Activated naive CD4-positive, alpha-beta T cell treated with anti-CD3 and anti-CD28 coated beads for 36 hours (primary cell): ENCODE measurements at regions of chr6 and their contacts with region 1.

Region 1: DNA sequence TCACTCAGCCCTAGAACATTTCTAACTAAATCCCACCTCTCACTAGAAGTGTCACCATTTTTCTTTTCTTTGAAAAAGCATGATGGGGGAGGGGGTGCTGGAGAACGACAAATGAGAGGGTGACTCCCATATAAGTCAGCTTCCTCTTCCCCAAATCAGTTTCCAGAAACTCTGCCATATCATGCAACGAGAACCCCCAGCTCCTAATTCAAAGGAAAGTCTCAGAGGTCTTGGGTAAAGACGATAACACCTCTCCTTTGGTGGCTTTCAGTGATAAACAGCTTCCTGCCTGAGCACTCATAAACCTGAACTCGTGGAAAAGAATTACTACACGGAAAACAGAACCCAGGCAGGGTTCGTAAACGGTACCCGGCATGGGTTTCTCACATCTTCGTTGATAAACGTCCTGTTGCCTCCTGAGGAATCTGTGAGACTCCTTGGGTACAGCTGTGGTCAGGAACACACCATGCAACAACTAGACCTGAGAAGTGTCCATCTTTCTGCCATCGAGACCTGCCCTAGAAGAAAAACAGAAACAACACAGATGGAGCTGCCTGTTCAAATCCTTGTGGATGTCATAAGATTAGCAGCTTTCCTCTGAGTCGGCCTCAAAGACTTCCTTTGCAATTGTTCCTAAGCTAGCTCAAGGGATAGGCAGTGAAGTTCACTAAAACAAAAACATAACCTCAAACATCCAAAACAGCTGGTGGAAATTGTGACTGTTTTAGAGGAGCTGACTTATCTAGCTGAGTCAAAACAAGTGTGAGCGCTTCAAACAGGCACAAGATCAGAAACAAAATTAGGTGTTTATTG is 185.8 kb upstream of the PRDM1 start:
- DNase-seq: peak; percentile 52
- H3K4me3 Mint-ChIP-seq: peak overlapping the region; percentile 45
- H3K27ac Mint-ChIP-seq: peak overlapping the region; percentile 73
- H3K4me1 Mint-ChIP-seq: peaks cover 16% of the 10 kb centered on the region
- H3K27me3 Mint-ChIP-seq: peaks cover 4% of the 10 kb centered on the region

Region 2: DNA sequence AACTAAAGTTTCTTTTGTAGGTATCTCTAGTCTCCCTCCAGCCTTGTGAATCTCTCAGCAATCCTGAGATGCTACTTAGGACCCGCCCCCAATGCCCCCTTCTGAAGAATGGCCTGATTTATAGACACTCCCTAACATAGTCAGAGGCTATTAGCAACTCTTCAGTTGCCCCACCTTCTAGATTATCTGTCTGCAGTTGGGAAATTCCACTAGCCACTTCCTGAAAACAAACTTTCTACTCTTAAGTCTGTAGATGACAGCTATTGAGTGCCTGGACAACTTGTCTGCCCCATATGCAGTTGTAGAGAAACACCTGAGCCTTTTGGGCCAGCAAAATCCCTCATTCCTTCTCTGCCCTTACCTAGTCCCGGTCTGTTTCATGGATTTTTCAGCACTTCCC is 309.3 kb before region 1 on chr6:
- CTCF ChIA-PET with region 1: no interaction called
- intact Hi-C with region 1: no loop called
- DNase-seq: peak; percentile 11
- H3K4me3 Mint-ChIP-seq: no peak overlapping the region
- H3K27ac Mint-ChIP-seq: no peak overlapping the region
- H3K4me1 Mint-ChIP-seq: peaks cover 22% of the 10 kb centered on the region
- H3K27me3 Mint-ChIP-seq: no peaks in the 10 kb centered on the region

Region 3: DNA sequence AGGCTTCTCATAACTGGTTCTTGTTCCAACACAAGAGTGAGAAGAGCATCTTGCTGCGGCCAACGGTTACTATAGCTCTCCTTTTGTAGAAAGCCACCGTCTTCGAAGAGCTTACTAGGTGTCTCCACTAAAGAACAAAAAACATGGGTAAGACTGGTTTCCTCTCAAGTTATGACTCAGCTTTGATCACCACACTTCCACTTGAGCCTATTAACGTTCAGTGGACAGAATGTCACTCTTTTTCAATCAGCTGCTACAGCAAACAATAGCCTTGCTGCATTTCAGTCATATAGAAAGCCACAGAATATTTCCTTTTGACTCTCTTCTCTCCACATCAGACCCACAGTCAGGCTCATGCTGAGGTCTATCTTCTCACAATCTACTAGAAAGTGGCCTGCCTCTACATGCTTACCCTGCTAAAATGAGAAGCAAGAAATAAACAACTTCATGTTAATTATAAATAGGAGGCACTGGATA is 253.9 kb before region 1 on chr6:
- CTCF ChIA-PET with region 1: no interaction called
- intact Hi-C with region 1: loop called (anchors 1 kb)
- DNase-seq: peak; percentile 35
- H3K4me3 Mint-ChIP-seq: no peak overlapping the region
- H3K27ac Mint-ChIP-seq: no peak overlapping the region
- H3K4me1 Mint-ChIP-seq: peaks cover 46% of the 10 kb centered on the region
- H3K27me3 Mint-ChIP-seq: peaks cover 20% of the 10 kb centered on the region

Region 4: DNA sequence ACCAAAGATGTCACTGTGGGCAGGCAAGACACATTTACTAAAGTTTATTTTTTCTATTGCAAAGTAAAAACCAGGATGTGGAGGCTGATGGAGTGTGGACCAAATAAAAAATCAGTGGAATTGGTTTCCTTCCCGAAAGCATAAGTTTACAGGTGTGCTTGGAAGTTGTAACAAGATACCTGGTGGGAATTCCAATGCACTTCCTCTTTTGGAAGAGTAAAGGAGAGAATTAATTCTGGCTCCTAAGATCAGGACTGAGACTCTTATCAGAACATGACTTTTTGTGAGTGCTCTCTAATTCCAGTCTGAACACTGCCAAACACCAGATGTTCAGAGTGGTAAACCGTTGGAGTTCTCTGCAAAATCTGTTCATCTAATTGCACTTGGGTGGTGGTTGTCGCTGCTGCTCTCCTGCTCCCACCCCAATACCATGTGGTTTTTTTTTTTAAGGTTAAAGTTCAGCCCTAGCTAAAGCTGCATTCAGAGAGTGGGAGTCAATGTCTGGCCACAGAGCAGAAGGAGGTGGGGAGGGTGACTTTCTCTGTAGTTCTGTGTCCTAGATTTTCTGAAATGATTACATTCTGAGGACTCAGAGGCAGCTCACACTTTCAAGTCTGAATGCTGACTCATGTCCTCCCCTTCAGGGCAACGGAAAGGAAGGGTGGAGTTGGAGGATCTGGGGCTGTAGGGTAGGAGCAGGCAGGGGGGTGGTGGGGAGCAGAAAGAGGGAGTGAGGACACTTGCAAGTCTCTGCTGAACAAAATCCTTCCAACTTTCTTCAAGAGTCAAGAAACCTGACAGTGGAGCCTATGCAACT is 90.0 kb before region 1 on chr6:
- CTCF ChIA-PET with region 1: no interaction called
- intact Hi-C with region 1: loop called (anchors 1 kb)
- DNase-seq: peak; percentile 74
- H3K4me3 Mint-ChIP-seq: no peak overlapping the region
- H3K27ac Mint-ChIP-seq: no peak overlapping the region
- H3K4me1 Mint-ChIP-seq: peaks cover 33% of the 10 kb centered on the region
- H3K27me3 Mint-ChIP-seq: no peaks in the 10 kb centered on the region

Region 5: DNA sequence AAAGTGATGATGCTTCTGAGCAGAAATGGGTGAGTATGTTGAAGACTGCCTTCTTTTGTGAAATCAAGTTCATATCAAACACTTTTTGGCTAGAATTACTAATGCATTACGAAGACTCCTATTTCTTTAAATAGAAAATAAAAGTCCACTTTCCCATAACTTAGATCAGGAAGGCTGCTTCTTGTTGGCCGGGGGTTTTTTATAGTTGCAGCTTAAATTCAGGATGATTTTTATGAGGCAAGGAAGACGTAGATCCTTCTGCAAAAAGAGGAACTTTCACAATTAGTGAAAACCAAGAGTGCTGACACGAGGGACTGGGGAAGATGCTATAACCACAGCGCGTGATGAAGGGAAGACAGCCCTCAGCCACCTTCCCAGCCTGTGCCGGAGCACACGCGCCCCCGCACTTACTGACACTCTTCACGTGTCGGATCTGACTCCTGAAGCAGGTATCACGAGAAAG is 20.3 kb before region 1 on chr6:
- CTCF ChIA-PET with region 1: no interaction called
- intact Hi-C with region 1: loop called (anchors 1 kb)
- DNase-seq: peak; percentile 74
- H3K4me3 Mint-ChIP-seq: peak overlapping the region; percentile 11
- H3K27ac Mint-ChIP-seq: peak overlapping the region; percentile 78
- H3K4me1 Mint-ChIP-seq: peaks cover 25% of the 10 kb centered on the region
- H3K27me3 Mint-ChIP-seq: peaks cover 30% of the 10 kb centered on the region

Region 6: GRCh38 chr6:105941621-105942412 is 41.5 kb after region 1 on chr6:
- CTCF ChIA-PET with region 1: no interaction called
- intact Hi-C with region 1: loop called (anchors 1 kb)
- DNase-seq: no peak
- H3K4me3 Mint-ChIP-seq: no peak overlapping the region
- H3K27ac Mint-ChIP-seq: no peak overlapping the region
- H3K4me1 Mint-ChIP-seq: peaks cover 10% of the 10 kb centered on the region
- H3K27me3 Mint-ChIP-seq: peaks cover 3% of the 10 kb centered on the region

Region 7: DNA sequence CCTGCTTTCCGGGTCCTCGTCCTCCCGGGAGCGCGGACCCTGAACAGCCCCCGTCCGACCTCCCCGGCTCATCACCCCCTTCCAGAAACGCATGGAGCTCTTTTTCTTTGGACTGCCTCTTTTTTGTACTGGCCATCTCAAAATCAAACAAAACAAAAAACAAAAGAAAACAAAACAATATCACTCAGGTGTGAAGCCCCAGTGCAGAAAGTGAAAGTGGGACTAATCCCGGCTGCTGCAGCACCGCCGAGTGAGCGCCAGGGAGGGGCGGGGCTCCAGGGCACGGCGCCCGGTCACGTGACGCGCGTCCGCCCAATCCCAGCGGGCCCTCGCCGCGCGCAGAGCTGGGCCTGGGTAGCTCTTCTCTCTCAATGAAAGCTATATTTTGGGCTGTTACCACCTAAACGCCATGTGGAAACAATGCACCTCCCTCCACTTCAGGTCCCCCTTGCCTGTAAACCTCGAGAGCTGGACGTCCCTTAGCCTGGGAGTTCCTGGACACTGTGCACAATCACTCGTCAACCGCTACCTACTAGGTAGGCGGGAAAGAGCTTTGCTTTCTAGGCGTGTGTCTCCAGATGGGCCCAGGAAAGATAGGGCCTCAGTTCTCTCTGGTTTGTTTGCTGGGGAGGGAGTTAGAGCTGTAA is 92.1 kb after region 1 on chr6:
- CTCF ChIA-PET with region 1: interaction called, 4 read pairs
- intact Hi-C with region 1: loop called (anchors 1 kb)
- DNase-seq: peak; percentile 90
- H3K4me3 Mint-ChIP-seq: peak overlapping the region; percentile 88
- H3K27ac Mint-ChIP-seq: peak overlapping the region; percentile 74
- H3K4me1 Mint-ChIP-seq: peaks cover 22% of the 10 kb centered on the region
- H3K27me3 Mint-ChIP-seq: peaks cover 72% of the 10 kb centered on the region

Region 8: DNA sequence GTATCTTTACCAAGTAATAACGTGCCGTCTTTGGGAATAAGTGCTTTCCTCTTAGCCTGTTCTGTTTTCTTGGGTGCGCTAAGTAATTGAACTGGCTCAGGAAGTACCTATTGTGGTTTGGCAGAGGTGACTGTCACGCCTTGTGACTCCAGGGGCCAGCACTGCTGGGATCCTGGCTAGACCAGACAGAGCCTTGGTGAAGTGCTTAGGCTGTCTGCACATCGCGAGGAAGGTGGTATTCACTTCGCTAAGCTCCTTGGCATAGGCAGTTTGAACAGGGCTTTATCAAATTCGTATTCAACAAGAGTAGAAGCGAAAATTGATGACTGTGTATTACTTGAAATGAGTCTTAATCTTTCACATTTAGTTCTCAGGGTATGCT is 203.4 kb after region 1 on chr6:
- CTCF ChIA-PET with region 1: interaction called, 4 read pairs
- intact Hi-C with region 1: loop called (anchors 1 kb)
- DNase-seq: peak; percentile 63
- H3K4me3 Mint-ChIP-seq: peak overlapping the region; percentile 20
- H3K27ac Mint-ChIP-seq: peak overlapping the region; percentile 1
- H3K4me1 Mint-ChIP-seq: peaks cover 57% of the 10 kb centered on the region
- H3K27me3 Mint-ChIP-seq: peaks cover 4% of the 10 kb centered on the region

Region 9: GRCh38 chr6:106141441-106142237 is 241.3 kb after region 1 on chr6:
- CTCF ChIA-PET with region 1: no interaction called
- intact Hi-C with region 1: no loop called
- DNase-seq: peak; percentile 75
- H3K4me3 Mint-ChIP-seq: peak overlapping the region; percentile 13
- H3K27ac Mint-ChIP-seq: peak overlapping the region; percentile 83
- H3K4me1 Mint-ChIP-seq: peaks cover 31% of the 10 kb centered on the region
- H3K27me3 Mint-ChIP-seq: no peaks in the 10 kb centered on the region

Region 10: DNA sequence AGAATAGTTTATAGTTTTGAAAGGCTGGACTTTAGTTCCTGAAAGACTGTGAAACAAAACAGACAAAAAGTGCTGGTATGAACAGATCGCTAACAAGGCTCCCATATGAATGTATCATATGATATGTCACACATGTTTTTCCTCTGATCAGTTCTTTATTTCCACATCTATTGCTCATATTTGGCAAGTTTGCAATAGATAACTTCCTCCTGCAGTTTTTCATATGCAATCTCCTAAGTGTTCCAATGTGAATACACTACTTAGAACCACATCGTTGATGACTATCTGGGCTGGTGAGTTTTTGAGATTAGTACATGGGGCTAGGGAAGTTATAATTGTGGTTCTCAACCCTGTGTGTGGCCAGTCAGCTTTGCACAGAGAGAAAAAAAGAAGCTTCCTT is 483.2 kb after region 1 on chr6:
- CTCF ChIA-PET with region 1: no interaction called
- intact Hi-C with region 1: no loop called
- DNase-seq: no peak
- H3K4me3 Mint-ChIP-seq: no peak overlapping the region
- H3K27ac Mint-ChIP-seq: no peak overlapping the region
- H3K4me1 Mint-ChIP-seq: peaks cover 2% of the 10 kb centered on the region
- H3K27me3 Mint-ChIP-seq: no peaks in the 10 kb centered on the region